K562 (cell line): ENCODE measurements at regions of chr2 and their contacts with region 1.

Region 1: GRCh38 chr2:9630749-9631483 is at the start of gene YWHAQ:
- DNase-seq: peak; percentile 98 to 99 (median 99)
- ATAC-seq: peak; percentile 97
- H3K4me3 ChIP-seq: peak within 1 kb of the TSS; percentile 77
- H3K27ac ChIP-seq: peak within 1 kb of the TSS; percentile 91
- H3K4me1 ChIP-seq: peaks cover 6 to 7% of the 10 kb centered on the region in 2 experiments; a peak in 4 of 5 replicates
- H3K27me3 ChIP-seq: no peaks in the 10 kb centered on the region
- CTCF ChIP-seq: no peak
- EP300 ChIP-seq: peak; percentile 15; the same call in 1 of the 2 replicates
- POLR2A ChIP-seq: peak; percentile 92
- RAD21 ChIP-seq: peak in 1 of 2 experiments; percentile 13; a peak in 1 of 4 replicates
- polyA plus RNA-seq, gene YWHAQ: 63.1 to 79.2 TPM

Region 2: GRCh38 chr2:9555297-9556141 is 75.4 kb before region 1 on chr2 and contains the start of gene ADAM17:
- CTCF ChIA-PET with region 1: no interaction called
- POLR2A ChIA-PET with region 1: interaction called, 17 read pairs
- in situ Hi-C with region 1: no loop called
- intact Hi-C with region 1: loop called (anchors 5 kb)
- DNase-seq: peak; percentile 91 to 97 (median 93)
- ATAC-seq: peak; percentile 94
- H3K4me3 ChIP-seq: peak within 1 kb of the TSS; percentile 79
- H3K27ac ChIP-seq: peak within 1 kb of the TSS; percentile 97
- H3K4me1 ChIP-seq: peaks cover 9 to 16% of the 10 kb centered on the region in 2 experiments; a peak in 4 of 5 replicates
- H3K27me3 ChIP-seq: no peaks in the 10 kb centered on the region
- CTCF ChIP-seq: peak; percentile 31 to 60 (median 41); a peak in 5 of 6 replicates
- EP300 ChIP-seq: peak; percentile 32; the same call in 1 of the 2 replicates
- POLR2A ChIP-seq: peak; percentile 93
- RAD21 ChIP-seq: 0 out of 4 replicates have a peak, but pooled peaks of 1 of the 2 experiments have one; percentile 6
- polyA plus RNA-seq, gene ADAM17: 5.8 to 7.8 TPM

Region 3: DNA sequence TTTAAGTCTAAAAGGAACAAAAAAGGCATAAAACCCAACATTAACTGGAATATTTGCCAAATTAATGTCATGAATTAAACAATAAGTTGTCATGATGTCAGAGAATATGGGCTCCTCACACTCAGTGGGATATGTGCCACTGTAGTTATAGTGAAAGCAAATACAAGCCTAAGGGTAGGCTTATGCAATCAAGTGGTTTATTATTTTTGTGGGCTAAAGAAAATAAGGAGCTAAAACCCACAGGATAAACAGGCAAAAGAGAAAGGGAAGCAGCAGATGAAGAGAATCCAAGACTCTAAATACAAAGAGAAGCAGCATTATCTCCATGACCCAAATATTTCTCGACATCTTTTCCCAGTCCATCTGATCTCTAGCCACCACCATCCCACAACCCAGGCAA is 17.6 kb before region 1 on chr2:
- CTCF ChIA-PET with region 1: no interaction called
- POLR2A ChIA-PET with region 1: interaction called, 19 read pairs
- in situ Hi-C with region 1: no loop called
- intact Hi-C with region 1: no loop called
- DNase-seq: no peak
- ATAC-seq: no peak
- H3K4me3 ChIP-seq: no peak overlapping the region
- H3K27ac ChIP-seq: no peak overlapping the region
- H3K4me1 ChIP-seq: peaks cover 0 to 5% of the 10 kb centered on the region in 2 experiments; a peak in 1 of 5 replicates
- H3K27me3 ChIP-seq: no peaks in the 10 kb centered on the region
- CTCF ChIP-seq: no peak
- EP300 ChIP-seq: no peak
- POLR2A ChIP-seq: no peak
- RAD21 ChIP-seq: no peak

Region 4: DNA sequence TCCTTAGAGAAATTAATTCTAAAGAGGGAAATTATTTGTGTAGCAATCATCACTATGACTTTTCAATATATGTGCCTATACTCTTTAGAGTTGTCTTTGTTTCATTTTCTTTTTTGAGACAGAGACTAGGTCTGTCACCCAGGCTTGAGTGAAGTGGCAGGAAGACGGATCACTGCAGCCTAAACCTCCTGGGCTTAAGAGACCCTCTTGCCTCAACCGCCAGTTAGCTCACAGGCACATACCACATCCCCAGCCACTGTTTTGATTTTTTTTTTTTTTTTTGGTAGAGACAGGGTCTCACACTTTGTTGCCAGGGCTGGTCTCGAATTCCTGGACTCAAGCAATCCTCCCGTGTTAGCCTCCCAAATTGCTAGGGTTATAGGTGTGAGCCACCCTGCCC is 12.5 kb before region 1 on chr2:
- CTCF ChIA-PET with region 1: no interaction called
- POLR2A ChIA-PET with region 1: interaction called, 19 read pairs
- in situ Hi-C with region 1: no loop called
- intact Hi-C with region 1: no loop called
- DNase-seq: no peak
- ATAC-seq: no peak
- H3K4me3 ChIP-seq: no peak overlapping the region
- H3K27ac ChIP-seq: no peak overlapping the region
- H3K4me1 ChIP-seq: peaks cover 0 to 2% of the 10 kb centered on the region in 2 experiments; a peak in 2 of 5 replicates
- H3K27me3 ChIP-seq: no peaks in the 10 kb centered on the region
- CTCF ChIP-seq: no peak
- EP300 ChIP-seq: no peak
- POLR2A ChIP-seq: no peak
- RAD21 ChIP-seq: no peak

Region 5: GRCh38 chr2:9763356-9764152 is 132.6 kb after region 1 on chr2:
- CTCF ChIA-PET with region 1: no interaction called
- POLR2A ChIA-PET with region 1: interaction called, 10 read pairs
- in situ Hi-C with region 1: no loop called
- intact Hi-C with region 1: loop called (anchors 10 kb)
- DNase-seq: peak in 2 of 4 experiments; percentile 64 to 65
- ATAC-seq: peak; percentile 44
- H3K4me3 ChIP-seq: no peak overlapping the region
- H3K27ac ChIP-seq: peak overlapping the region; percentile 48; the same call in 2 of the 3 replicates
- H3K4me1 ChIP-seq: peaks cover 31 to 46% of the 10 kb centered on the region in 2 experiments
- H3K27me3 ChIP-seq: no peaks in the 10 kb centered on the region
- CTCF ChIP-seq: no peak
- EP300 ChIP-seq: peak; percentile 65; the same call in 1 of the 2 replicates
- POLR2A ChIP-seq: no peak
- RAD21 ChIP-seq: no peak

Region 6: GRCh38 chr2:9770308-9771100 is 139.6 kb after region 1 on chr2:
- CTCF ChIA-PET with region 1: no interaction called
- POLR2A ChIA-PET with region 1: interaction called, 5 read pairs
- in situ Hi-C with region 1: no loop called
- intact Hi-C with region 1: loop called (anchors 10 kb)
- DNase-seq: peak; percentile 76 to 83 (median 78)
- ATAC-seq: peak; percentile 86
- H3K4me3 ChIP-seq: no peak overlapping the region
- H3K27ac ChIP-seq: no peak overlapping the region
- H3K4me1 ChIP-seq: peaks cover 20 to 51% of the 10 kb centered on the region in 2 experiments; a peak in 4 of 5 replicates
- H3K27me3 ChIP-seq: no peaks in the 10 kb centered on the region; a peak in 1 of 5 replicates
- CTCF ChIP-seq: peak; percentile 80 to 83 (median 82)
- EP300 ChIP-seq: no peak
- POLR2A ChIP-seq: no peak
- RAD21 ChIP-seq: peak; percentile 50 to 68

Region 7: GRCh38 chr2:9843229-9844035 is 212.5 kb after region 1 on chr2 and contains the start of gene TAF1B:
- CTCF ChIA-PET with region 1: no interaction called
- POLR2A ChIA-PET with region 1: interaction called, 10 read pairs
- in situ Hi-C with region 1: no loop called
- intact Hi-C with region 1: no loop called
- DNase-seq: peak; percentile 95 to 97 (median 97)
- ATAC-seq: peak; percentile 95
- H3K4me3 ChIP-seq: peak within 1 kb of the TSS; percentile 55
- H3K27ac ChIP-seq: peak within 1 kb of the TSS; percentile 88
- H3K4me1 ChIP-seq: peaks cover 10 to 17% of the 10 kb centered on the region in 2 experiments
- H3K27me3 ChIP-seq: no peaks in the 10 kb centered on the region
- CTCF ChIP-seq: peak; percentile 68 to 80 (median 71)
- EP300 ChIP-seq: no peak; the same call in 1 of the 2 replicates
- POLR2A ChIP-seq: peak; percentile 79
- RAD21 ChIP-seq: peak; percentile 33 to 51; a peak in 3 of 4 replicates
- polyA plus RNA-seq, gene TAF1B: 13.2 to 17.4 TPM